Caco-2 (cell line): ENCODE measurements at regions of chr19 and their contacts with region 1.

Region 1: DNA sequence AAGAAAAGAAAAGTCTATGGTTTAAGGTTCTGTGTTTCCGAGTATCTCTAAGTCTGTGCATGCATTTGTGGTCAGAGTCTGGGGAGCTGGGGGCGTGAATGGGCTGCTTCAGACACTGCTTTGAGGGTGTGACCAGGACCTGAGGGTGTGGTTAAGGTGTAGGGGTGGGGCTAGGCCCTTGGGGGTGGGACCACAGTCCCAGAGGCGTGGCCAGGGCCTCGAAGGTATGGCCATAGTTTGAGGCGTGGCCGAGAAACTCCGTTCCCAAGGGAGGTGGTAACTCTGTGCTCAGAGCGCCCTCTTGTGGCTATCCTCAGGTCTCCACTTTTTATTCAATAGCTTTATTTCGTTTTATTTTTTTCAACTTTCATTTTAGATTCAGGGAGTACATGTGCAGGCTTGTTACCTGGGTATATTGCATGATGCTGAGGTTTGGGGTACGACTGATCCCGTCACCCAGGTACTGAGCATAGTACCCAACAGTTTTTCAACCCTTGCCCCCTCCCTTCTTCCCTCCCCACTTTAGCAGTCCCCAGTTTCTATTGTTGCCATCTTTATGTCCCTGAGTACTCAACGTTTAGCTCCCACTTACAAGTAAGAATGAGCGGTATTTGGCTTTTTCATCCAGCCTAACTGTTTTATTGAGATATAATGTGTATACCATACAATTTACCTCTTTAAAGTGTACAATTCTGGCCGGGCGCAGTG is 7.0 kb upstream of the CBLC start:
- DNase-seq: peak; percentile 97 to 98
- H3K4me3 ChIP-seq: no peak overlapping the region
- H3K4me3 Mint-ChIP-seq: peak overlapping the region; percentile 6
- H3K27ac Mint-ChIP-seq: no peak overlapping the region
- H3K4me1 ChIP-seq: peaks cover 2% of the 10 kb centered on the region
- H3K4me1 Mint-ChIP-seq: no peaks in the 10 kb centered on the region
- H3K27me3 ChIP-seq: no peaks in the 10 kb centered on the region
- H3K27me3 Mint-ChIP-seq: no peaks in the 10 kb centered on the region
- CTCF ChIP-seq: peak; percentile 66 to 95

Region 2: DNA sequence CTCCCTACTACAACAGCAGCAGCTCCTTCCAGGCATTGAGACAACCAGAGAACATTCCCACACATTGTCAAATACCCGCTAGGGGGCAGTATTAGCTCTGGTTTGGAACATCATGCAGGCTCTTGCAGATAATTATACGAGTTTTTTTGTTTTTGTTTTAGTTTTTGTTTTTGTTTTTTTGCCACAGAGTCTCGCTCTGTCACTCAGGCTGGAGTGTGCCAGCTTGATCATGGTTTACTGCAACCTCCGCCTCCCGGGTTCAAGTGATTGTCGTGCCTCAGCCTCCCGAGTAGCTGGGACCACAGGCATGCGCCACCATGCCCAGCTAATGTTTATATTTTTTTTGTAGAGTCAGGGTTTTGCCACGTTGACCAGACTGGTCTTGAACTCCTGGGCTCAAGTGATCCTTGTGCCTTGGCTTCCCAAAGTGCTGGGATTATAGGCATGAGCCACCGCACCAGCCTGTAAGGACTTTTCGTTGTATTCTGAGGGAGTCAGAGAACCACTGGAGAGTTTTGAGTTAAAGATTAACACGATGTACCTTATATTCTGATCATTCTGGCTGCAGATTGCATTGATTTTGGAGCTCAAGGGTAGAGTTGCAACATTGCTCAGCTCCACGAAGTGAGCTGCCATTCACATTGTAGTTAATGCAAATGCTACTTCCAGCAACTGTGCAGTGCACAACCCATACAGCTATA is 199.6 kb before region 1 on chr19:
- CTCF ChIA-PET with region 1: interaction called, 26 read pairs
- POLR2A ChIA-PET with region 1: no interaction called
- intact Hi-C with region 1: loop called (anchors 1 kb)
- DNase-seq: peak; percentile 73 to 83
- H3K4me3 ChIP-seq: no peak overlapping the region
- H3K4me3 Mint-ChIP-seq: no peak overlapping the region
- H3K27ac Mint-ChIP-seq: no peak overlapping the region
- H3K4me1 ChIP-seq: peaks cover 40% of the 10 kb centered on the region
- H3K4me1 Mint-ChIP-seq: peaks cover 43% of the 10 kb centered on the region
- H3K27me3 ChIP-seq: no peaks in the 10 kb centered on the region
- H3K27me3 Mint-ChIP-seq: no peaks in the 10 kb centered on the region
- CTCF ChIP-seq: peak; percentile 57 to 70

Region 3: DNA sequence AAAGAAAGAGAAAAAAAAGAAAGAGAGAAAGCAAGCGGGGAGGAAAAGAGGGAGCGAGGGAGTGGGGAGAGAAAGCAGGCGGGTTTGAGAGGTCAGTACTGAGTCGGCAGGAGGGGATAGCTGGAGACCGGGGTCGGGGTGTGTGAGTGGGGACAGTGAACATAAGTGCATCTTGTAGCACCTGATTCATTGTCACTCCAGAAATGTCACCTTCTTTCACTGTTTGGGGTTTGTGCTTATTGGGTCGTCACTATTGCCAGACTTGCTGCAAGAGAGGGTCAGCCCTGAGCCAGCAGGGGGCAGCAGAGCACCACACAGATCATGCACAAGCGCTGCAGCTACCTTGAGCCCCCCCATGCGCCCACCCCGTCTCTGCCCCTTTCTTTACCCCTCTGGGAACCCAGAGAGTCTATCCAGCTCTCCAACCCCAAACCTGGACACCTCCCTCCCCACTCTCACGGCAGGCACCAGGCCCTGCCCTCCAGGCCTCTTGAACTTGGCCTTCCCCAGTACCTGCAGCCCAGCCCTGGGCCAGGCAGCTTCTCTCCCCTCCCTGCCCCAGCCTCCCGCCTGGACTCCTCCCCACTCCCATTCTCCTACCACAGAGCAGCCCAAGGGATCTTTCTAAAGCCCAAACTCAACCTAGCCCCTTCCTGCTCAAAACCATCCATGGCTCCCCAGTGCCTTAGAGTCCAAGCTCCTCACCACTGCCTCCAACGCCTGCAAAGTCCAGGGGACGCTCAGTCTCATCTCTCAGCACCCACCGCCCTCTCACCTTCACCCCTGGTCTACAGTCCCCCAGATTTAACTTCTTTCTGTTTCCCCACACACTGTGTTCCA is 81.4 kb before region 1 on chr19:
- CTCF ChIA-PET with region 1: interaction called, 46 read pairs
- POLR2A ChIA-PET with region 1: interaction called, 3 read pairs
- intact Hi-C with region 1: loop called (anchors 1 kb)
- DNase-seq: peak; percentile 85 to 89
- H3K4me3 ChIP-seq: no peak overlapping the region
- H3K4me3 Mint-ChIP-seq: peak overlapping the region; percentile 7
- H3K27ac Mint-ChIP-seq: peak overlapping the region; percentile 5
- H3K4me1 ChIP-seq: peaks cover 31% of the 10 kb centered on the region
- H3K4me1 Mint-ChIP-seq: peaks cover 24% of the 10 kb centered on the region
- H3K27me3 ChIP-seq: no peaks in the 10 kb centered on the region
- H3K27me3 Mint-ChIP-seq: no peaks in the 10 kb centered on the region
- CTCF ChIP-seq: peak; percentile 97 to 99

Region 4: DNA sequence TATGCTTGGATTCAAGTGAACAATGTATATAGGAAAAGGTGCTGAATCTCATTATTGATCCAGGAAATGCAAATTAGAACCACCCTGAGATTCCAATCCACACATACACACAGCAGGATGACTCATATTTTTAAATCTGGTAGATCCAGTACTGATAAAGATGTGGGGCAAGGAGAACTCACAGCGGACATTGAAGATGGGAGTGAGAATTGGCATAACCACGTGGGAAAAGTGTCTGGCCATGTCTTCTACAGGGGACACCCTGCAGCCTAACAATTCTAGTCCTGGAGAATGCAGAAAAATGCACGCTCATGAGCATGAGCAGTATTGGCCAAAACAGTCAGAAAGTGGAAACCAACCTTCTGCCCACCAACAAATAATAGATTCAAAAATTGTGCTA is 35.7 kb before region 1 on chr19:
- CTCF ChIA-PET with region 1: interaction called, 11 read pairs
- POLR2A ChIA-PET with region 1: no interaction called
- intact Hi-C with region 1: no loop called
- DNase-seq: no peak
- H3K4me3 ChIP-seq: no peak overlapping the region
- H3K4me3 Mint-ChIP-seq: no peak overlapping the region
- H3K27ac Mint-ChIP-seq: no peak overlapping the region
- H3K4me1 ChIP-seq: peaks cover 15% of the 10 kb centered on the region; the same call in 1 of the 2 replicates
- H3K4me1 Mint-ChIP-seq: no peaks in the 10 kb centered on the region
- H3K27me3 ChIP-seq: no peaks in the 10 kb centered on the region
- H3K27me3 Mint-ChIP-seq: no peaks in the 10 kb centered on the region
- CTCF ChIP-seq: no peak

Region 5: DNA sequence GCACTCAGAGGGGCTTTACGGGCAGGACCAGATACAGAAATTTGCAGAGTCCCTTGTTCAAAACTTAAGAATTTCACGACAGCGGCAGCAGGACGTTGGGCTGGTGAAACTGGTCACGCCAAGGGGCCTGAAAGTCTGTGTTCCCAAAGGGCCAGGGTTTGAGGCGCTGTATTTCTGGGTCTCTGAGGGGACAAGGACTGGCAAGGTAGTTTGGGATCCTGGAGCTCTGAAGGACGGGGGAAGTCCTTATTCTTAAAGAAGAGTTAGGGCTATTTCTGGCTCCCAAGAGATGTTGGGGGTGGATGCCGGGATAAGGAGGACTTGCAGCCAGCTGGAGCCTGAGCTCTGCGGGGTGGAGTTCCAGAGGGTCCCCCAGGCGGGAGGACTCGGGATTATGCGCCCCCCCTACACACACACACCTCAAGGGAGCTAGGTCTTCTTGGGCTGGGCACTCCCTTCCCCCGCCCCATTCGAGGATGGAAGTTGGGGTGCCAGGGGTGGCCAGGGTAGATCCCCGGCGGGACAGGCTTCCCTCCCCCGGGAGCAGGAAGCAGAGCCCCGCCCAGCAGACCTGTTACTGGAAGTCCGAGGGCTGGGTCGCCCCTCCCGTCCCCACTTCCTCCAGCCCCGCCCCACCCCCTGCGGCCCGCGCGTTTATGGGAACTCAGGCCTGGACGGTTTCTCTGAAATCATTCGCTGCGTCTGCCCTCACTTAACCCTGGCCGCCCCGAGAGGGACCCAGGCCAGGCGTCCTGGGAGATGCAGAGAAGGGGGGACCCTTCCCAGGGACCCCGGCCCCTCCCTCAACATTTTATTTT is 16.6 kb before region 1 on chr19:
- CTCF ChIA-PET with region 1: interaction called, 11 read pairs
- POLR2A ChIA-PET with region 1: no interaction called
- intact Hi-C with region 1: no loop called
- DNase-seq: peak in 1 of 2 experiments; percentile 48
- H3K4me3 ChIP-seq: peak overlapping the region; percentile 27
- H3K4me3 Mint-ChIP-seq: peak overlapping the region; percentile 60
- H3K27ac Mint-ChIP-seq: no peak overlapping the region
- H3K4me1 ChIP-seq: peaks cover 28% of the 10 kb centered on the region
- H3K4me1 Mint-ChIP-seq: peaks cover 5% of the 10 kb centered on the region
- H3K27me3 ChIP-seq: no peaks in the 10 kb centered on the region
- H3K27me3 Mint-ChIP-seq: no peaks in the 10 kb centered on the region
- CTCF ChIP-seq: no peak

Region 6: DNA sequence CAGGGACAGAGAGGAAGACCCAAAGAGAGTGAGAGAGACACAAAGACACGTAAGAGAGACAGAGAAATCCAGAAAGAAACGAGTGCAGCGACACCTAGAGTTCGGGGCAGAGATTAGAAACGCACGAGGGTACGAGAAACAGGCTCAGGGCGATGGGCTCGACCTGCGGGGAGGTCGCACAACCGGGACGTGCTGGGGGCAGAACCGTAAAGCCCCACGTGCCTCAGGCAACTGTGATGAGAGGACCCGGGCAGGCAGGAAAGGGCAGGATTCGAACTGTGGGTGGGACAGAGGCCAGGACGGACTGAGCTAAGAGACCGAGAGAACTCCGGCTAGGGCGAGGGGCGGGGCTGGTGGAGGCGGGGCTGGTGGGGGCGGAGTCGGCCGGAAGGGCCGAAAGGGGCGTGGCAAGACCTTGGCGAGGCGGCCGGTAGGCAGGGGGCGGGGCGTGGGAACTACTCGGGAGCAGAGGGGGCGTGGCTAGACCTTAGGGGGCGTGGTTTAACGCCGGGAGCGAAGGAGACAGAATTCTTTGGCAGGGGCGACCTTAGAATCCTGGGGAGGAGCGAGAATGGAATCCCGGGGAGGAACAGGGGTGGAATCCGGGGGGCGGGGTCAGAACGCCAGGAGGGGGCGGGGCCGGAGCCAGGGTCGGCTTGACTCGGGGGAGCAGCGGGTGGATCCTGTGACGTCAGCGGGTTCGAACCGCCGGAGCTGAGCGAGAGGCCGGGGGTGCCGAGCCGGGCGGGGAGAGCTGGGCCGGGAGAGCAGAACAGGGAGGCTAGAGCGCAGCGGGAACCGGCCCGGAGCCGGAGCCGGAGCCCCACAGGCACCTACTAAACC is 75.1 kb after region 1 on chr19 and contains the start of gene NECTIN2:
- CTCF ChIA-PET with region 1: interaction called, 12 read pairs
- POLR2A ChIA-PET with region 1: interaction called, 4 read pairs
- intact Hi-C with region 1: no loop called
- DNase-seq: peak; percentile 100
- H3K4me3 ChIP-seq: peak within 1 kb of the TSS; percentile 76
- H3K4me3 Mint-ChIP-seq: peak within 1 kb of the TSS; percentile 76
- H3K27ac Mint-ChIP-seq: peak within 1 kb of the TSS; percentile 98
- H3K4me1 ChIP-seq: peaks cover 35% of the 10 kb centered on the region
- H3K4me1 Mint-ChIP-seq: peaks cover 34% of the 10 kb centered on the region
- H3K27me3 ChIP-seq: no peaks in the 10 kb centered on the region
- H3K27me3 Mint-ChIP-seq: no peaks in the 10 kb centered on the region
- CTCF ChIP-seq: peak; percentile 73 to 76
- total RNA-seq, gene NECTIN2: 257 and 258 TPM in 2 replicates